Heart left ventricle (tissue), 16 donors: ENCODE measurements at regions of chr16 and their contacts with region 1.

Region 1: GRCh38 chr16:73878611-73879010 is 418.0 kb upstream of the PSMD7 start:
- DNase-seq: no peak
- ATAC-seq: peak in 1 of 4 donors; percentile 41
- H3K4me3 ChIP-seq: no peak overlapping the region
- H3K27ac ChIP-seq: no peak overlapping the region
- H3K4me1 ChIP-seq: peaks cover 0 to 1% (median 0%) of the 10 kb centered on the region in 12 donors
- H3K27me3 ChIP-seq: no peaks in the 10 kb centered on the region
- CTCF ChIP-seq: peak; percentile 42 to 76 (median 68)
- POLR2A ChIP-seq: no peak

Region 2: DNA sequence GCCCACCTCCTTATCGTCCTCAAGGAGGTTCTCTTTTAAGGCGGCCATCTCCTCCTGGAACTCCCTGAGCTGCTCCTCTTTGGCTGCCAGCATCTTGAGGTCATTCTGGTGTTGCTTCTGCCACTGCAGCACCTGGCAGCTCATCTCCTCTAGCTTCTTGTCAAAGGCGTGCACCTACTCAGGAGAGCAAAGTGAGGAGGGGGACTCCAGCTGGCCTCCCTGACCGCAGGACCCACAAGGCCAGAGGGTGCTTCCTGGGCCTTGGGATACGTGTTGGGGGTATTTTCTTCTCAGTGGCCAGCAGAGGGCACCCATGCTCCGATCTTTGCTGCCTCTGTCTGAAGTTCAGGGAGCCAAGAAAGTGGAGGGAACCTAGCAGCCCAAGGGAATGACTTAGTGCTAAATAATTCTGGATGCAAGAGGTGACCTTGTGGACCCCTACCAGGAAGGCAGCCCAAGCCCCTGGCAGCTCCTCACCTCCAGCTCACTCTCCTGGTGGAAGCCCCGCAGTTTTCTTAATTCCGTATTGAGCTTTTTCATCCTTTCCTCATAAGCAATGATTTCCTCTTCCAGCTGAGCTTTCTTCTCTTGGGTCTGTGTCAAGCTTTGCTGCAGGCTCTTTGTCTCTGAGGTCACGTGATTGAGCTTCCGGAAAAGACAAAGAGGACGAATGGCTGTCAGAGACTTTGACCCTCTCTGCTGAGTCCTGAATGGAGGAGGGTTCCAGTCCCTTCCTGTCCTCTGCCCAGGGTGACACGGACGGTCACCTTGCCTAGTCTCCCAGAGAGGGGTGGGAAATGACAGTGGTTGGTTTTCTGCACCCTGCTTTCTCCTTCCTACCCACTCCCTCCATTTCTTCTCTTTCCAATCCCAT is 1753.6 kb before region 1 on chr16:
- intact Hi-C with region 1: loop called in 5 of 10 experiments (anchors 5 to 10 kb)
- DNase-seq: peak; percentile 57 to 76 (median 70)
- ATAC-seq: peak; percentile 32 to 86 (median 84)
- H3K4me3 ChIP-seq: peak overlapping the region in 1 of 12 donors; percentile 27
- H3K27ac ChIP-seq: peak overlapping the region in 3 of 12 donors; percentile 22 to 80 (median 25)
- H3K4me1 ChIP-seq: peaks cover 0 to 22% (median 0%) of the 10 kb centered on the region in 12 donors
- H3K27me3 ChIP-seq: peaks cover 0 to 8% (median 0%) of the 10 kb centered on the region in 9 donors
- CTCF ChIP-seq: peak; percentile 59 to 84 (median 70)
- POLR2A ChIP-seq: no peak

Region 3: GRCh38 chr16:72501739-72502593 is 1376.6 kb before region 1 on chr16:
- intact Hi-C with region 1: loop called in 9 of 10 experiments (anchors 1 to 10 kb)
- DNase-seq: peak in 3 of 5 donors; percentile 29 to 30 (median 29)
- ATAC-seq: peak in 3 of 4 donors; percentile 67 to 80 (median 74)
- H3K4me3 ChIP-seq: no peak overlapping the region
- H3K27ac ChIP-seq: no peak overlapping the region
- H3K4me1 ChIP-seq: no peaks in the 10 kb centered on the region
- H3K27me3 ChIP-seq: no peaks in the 10 kb centered on the region
- CTCF ChIP-seq: peak; percentile 58 to 84 (median 72)
- POLR2A ChIP-seq: no peak

Region 4: GRCh38 chr16:73565262-73565661 is 313.3 kb before region 1 on chr16:
- intact Hi-C with region 1: loop called in 9 of 10 experiments (anchors 2 to 10 kb)
- DNase-seq: no peak
- ATAC-seq: no peak
- H3K4me3 ChIP-seq: no peak overlapping the region
- H3K27ac ChIP-seq: no peak overlapping the region
- H3K4me1 ChIP-seq: no peaks in the 10 kb centered on the region
- H3K27me3 ChIP-seq: peaks cover 0 to 10% (median 5%) of the 10 kb centered on the region in 9 donors
- CTCF ChIP-seq: peak in 7 of 12 donors; percentile 14 to 45 (median 39)
- POLR2A ChIP-seq: no peak

Region 5: DNA sequence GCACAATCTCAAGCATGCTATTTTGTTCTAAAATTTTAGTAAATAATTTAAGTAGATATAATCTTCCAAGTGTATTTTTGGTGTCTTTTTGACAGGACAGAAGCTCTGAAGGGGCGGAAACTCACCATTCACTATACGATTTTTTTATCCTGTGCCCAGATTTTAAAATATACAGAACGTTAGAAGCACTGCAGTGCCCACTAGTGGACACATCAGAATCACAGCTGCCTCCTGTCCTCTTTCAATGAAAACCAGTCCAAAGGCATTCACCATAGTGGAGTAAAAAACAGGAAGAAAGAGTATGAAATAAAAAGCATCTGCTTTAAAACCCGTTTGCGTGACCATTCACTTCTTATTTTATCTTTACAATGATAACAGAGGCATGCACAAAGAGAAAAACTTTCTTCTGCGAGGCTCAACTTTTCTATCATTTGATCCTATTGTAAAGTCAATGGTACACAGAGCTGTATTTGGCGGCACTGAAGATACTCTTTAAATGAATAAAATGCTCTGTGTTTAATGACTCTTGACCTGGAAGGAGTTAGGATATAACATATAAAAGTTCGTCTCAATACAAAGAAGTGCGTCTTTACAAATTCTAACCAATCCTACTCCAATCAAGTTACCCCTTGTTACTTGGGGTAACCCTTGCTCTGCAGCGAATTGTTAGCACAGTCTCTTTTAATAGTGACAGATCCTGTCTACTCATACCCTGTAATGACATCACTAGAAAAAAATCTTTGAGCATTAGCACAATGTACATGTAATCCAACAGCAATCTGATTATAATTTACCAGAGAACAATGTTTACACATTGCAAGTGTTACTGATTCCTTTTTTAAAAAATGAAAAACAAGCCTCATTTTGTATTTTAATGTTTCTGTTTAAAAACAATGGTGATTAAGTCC is 78.2 kb after region 1 on chr16:
- intact Hi-C with region 1: loop called in 2 of 10 experiments (anchors 5 to 10 kb)
- DNase-seq: peak in 4 of 5 donors; percentile 34 to 48 (median 46)
- ATAC-seq: peak in 1 of 4 donors; percentile 66
- H3K4me3 ChIP-seq: no peak overlapping the region
- H3K27ac ChIP-seq: no peak overlapping the region
- H3K4me1 ChIP-seq: peaks cover 0 to 5% (median 0%) of the 10 kb centered on the region in 12 donors
- H3K27me3 ChIP-seq: peaks cover 0 to 5% (median 0%) of the 10 kb centered on the region in 9 donors
- CTCF ChIP-seq: peak; percentile 73 to 89 (median 81)
- POLR2A ChIP-seq: no peak